Vagina (tissue), 2 donors: ENCODE measurements at regions of chr18 and their contacts with region 1.

Region 1: GRCh38 chr18:23032030-23032582 is 99.0 kb downstream of the RBBP8 start:
- DNase-seq: no peak
- H3K4me3 ChIP-seq: no peak overlapping the region
- H3K27ac ChIP-seq: no peak overlapping the region
- H3K4me1 ChIP-seq: no peaks in the 10 kb centered on the region
- H3K27me3 ChIP-seq: no peaks in the 10 kb centered on the region
- CTCF ChIP-seq: no peak
- POLR2A ChIP-seq: no peak

Region 2: GRCh38 chr18:22999212-22999611 is 32.9 kb before region 1 on chr18:
- intact Hi-C with region 1: no loop called
- DNase-seq: no peak
- H3K4me3 ChIP-seq: no peak overlapping the region
- H3K27ac ChIP-seq: no peak overlapping the region
- H3K4me1 ChIP-seq: no peaks in the 10 kb centered on the region
- H3K27me3 ChIP-seq: no peaks in the 10 kb centered on the region
- CTCF ChIP-seq: no peak
- POLR2A ChIP-seq: no peak

Region 3: DNA sequence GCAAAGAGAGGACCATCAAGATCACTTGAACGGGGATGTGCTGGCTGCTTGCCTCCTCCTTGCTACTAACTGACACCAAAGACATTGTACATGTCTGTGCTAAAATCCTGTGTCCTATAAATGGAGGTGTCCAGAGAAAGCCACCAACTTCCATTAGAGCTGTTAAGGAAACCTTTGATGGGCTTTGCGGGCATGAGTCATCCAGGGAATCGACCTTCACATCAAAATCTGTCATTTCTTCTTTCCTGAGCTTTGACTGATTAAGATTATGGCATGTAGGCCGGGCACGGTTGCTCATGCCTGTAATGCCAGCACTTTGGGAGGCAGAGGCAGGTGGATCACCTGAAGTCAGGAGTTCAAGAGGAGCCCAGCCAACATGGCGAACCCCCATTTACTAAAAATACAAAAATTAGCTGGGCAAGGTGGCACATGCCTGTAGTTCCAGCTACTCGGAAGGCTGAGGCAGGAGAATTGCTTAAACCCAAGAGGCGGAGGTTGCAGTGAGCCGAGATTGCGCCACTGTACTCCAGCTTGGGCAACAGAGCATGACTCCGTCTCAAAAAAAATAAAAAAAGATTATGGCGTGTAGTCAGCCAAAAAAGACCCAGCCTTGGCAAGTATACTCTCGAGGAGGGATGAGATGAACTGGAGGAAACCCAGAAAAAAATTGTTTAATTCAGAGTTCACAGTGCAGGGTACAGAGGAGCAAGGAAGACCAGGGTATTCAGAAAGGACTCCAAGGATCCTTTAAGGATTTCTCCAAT is 219.0 kb after region 1 on chr18:
- intact Hi-C with region 1: no loop called
- DNase-seq: no peak
- H3K4me3 ChIP-seq: no peak overlapping the region
- H3K27ac ChIP-seq: peak overlapping the region; percentile 27
- H3K4me1 ChIP-seq: peaks cover 16% of the 10 kb centered on the region
- H3K27me3 ChIP-seq: no peaks in the 10 kb centered on the region
- CTCF ChIP-seq: no peak
- POLR2A ChIP-seq: no peak

Region 4: GRCh38 chr18:23416298-23416697 is 384.2 kb after region 1 on chr18:
- intact Hi-C with region 1: loop called (anchors 10 kb)
- DNase-seq: no peak
- H3K4me3 ChIP-seq: no peak overlapping the region
- H3K27ac ChIP-seq: no peak overlapping the region
- H3K4me1 ChIP-seq: no peaks in the 10 kb centered on the region
- H3K27me3 ChIP-seq: no peaks in the 10 kb centered on the region
- CTCF ChIP-seq: no peak
- POLR2A ChIP-seq: no peak